Heart right ventricle (tissue), 16 donors: ENCODE measurements at regions of chr10 and their contacts with region 1.

Region 1: DNA sequence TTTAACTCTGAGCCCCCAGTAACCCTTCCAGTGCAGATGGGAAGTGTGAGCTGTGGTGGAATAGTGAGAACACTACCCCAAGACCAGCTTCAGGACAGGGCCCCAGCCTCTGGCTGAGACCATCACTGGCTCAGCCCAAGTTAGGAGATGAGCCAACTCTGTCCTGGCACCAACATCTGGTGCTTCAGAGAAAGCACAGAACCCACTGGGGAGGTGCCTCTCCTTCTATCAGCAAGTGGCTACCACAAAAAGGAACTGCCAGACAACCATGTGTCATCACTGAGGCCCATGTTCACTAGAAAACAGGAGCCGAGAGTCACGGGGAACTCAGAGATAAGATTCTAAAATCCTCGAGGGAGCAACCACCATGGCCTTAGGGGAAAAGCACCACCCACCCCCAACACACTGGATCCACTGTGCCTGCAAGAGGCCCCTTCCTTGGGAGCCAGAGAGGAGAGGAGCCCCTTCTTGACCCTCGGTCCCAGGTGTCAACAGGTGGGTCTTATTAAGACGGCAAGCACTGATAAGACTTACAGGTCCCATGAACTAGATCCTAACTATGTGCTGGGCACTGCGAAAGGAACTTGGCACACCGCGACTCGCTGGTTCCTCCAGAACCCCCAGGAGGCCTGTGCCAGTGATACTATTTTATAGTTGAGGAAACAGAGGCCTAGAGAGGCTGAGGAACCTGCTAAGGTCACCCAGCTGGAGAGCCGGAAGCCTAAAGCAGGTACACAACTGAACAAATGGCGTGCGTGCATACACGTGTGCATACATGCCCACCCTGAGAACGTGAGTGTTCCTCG is 102.7 kb downstream of the FAM53B start:
- DNase-seq: peak; percentile 49 to 77
- ATAC-seq: peak; percentile 51 to 86 (median 76)
- H3K4me3 ChIP-seq: peak overlapping the region in 2 of 10 donors; percentile 16 to 25
- H3K27ac ChIP-seq: peak overlapping the region; percentile 29 to 89 (median 79)
- H3K4me1 ChIP-seq: peaks cover 49 to 100% (median 96%) of the 10 kb centered on the region in 9 donors
- H3K27me3 ChIP-seq: no peaks in the 10 kb centered on the region
- CTCF ChIP-seq: no peak

Region 2: GRCh38 chr10:124560377-124561105 is 80.9 kb before region 1 on chr10:
- intact Hi-C with region 1: loop called in 1 of 10 experiments (anchors 5 kb)
- DNase-seq: peak; percentile 56 to 74
- ATAC-seq: peak; percentile 88 to 96 (median 94)
- H3K4me3 ChIP-seq: no peak overlapping the region
- H3K27ac ChIP-seq: peak overlapping the region; percentile 47 to 93 (median 81)
- H3K4me1 ChIP-seq: peaks cover 7 to 54% (median 42%) of the 10 kb centered on the region in 9 donors
- H3K27me3 ChIP-seq: no peaks in the 10 kb centered on the region
- CTCF ChIP-seq: peak in 1 of 9 donors; percentile 8

Region 3: GRCh38 chr10:124677749-124678556 is 36.5 kb after region 1 on chr10:
- intact Hi-C with region 1: loop called in 3 of 10 experiments (anchors 5 kb)
- DNase-seq: peak in 1 of 2 donors; percentile 61
- ATAC-seq: peak; percentile 50 to 84 (median 78)
- H3K4me3 ChIP-seq: peak overlapping the region in 6 of 10 donors; percentile 14 to 31 (median 19)
- H3K27ac ChIP-seq: peak overlapping the region; percentile 72 to 94 (median 87)
- H3K4me1 ChIP-seq: peaks cover 47 to 99% (median 92%) of the 10 kb centered on the region in 9 donors
- H3K27me3 ChIP-seq: no peaks in the 10 kb centered on the region
- CTCF ChIP-seq: no peak

Region 4: GRCh38 chr10:124708922-124709520 is 67.5 kb after region 1 on chr10:
- intact Hi-C with region 1: loop called in 2 of 10 experiments (anchors 5 kb)
- DNase-seq: no peak
- ATAC-seq: no peak
- H3K4me3 ChIP-seq: no peak overlapping the region
- H3K27ac ChIP-seq: peak overlapping the region in 9 of 10 donors; percentile 44 to 98 (median 74)
- H3K4me1 ChIP-seq: peaks cover 50 to 100% (median 95%) of the 10 kb centered on the region in 9 donors
- H3K27me3 ChIP-seq: no peaks in the 10 kb centered on the region
- CTCF ChIP-seq: no peak